ENCODE measurements at regions of chr13 and their contacts with region 1.

Region 1: DNA sequence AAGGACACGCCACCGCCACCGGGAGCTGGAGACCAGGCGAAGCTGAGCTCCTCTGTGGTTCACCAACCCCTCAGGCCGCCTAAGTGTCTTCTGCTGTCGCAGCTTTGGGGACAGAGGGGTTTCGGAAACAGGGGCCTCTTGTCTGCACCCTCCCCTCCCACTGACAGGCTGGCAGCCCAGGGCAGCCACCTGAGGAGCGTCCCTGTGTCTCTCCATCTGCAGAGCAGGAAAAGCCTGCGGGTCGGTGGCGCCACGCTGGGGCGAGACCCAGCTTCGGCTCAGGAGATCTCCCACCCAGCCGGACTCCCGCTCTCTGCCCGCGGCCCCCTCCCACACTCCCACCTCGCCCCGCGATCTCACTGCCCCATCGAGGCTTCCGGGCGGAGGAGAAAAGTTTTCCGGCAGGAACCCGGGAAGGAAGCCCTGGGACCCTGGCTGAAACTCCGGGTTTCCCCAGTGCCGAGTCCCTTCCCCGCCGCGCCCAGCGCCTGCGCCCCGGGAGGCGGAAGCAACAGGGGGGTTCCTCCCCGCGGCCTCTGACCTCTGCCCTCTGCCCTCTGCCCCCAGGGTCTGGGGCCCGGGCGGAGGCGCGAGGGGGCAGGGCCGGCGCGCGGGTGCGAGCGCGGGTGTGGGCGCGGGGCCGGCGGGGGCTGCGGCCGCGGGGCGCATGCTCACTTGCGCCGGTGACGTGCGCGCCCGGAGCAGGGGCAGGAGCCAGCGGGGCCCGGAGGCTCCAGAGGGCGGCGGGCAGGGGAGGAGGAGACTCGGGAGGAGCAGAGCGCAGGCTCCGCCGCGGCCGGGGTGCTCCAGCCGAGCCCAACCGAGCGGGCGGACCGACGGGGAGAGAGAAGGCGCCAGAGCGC is at the start of gene ATP11A:
- DNase-seq: peak; percentile 79 to 95 (median 90)
- H3K4me3 ChIP-seq: peak within 1 kb of the TSS; percentile 65 to 99 (median 89)
- H3K27ac ChIP-seq: peak within 1 kb of the TSS; percentile 61 to 97 (median 94)
- H3K27me3 ChIP-seq: no peaks in the 10 kb centered on the region
- CTCF ChIP-seq: peak in 19 of 56 donors; percentile 3 to 46 (median 18)
- total RNA-seq, gene ATP11A: 43.2 to 193 (median 80.8) TPM

Region 2: DNA sequence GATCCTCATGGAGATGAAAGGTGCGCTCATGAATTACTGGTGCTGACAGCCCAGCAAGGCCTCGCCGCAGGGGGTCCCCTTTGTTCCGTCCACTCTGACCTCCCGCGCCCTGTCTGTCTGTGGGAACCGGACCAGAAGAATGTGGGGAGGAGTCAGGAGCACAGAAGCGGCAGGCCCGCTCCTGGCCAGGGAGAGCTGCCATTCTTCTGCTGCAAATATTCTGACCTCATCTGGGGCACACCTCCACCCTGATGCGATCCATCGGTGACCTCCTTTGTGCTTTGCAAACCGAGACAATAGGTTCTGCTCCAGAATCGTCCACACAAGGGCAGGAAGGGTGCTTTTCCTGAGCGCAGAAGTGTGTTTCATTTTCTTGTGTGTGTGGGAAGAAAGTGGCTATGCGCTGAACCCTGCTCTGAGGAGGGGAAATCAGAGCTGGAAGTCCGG is 484.6 kb before region 1 on chr13:
- intact Hi-C with region 1: no loop called
- DNase-seq: no peak
- H3K4me3 ChIP-seq: peak overlapping the region in 34 of 59 donors; percentile 3 to 53 (median 26)
- H3K27ac ChIP-seq: no peak overlapping the region
- H3K27me3 ChIP-seq: peaks cover 0 to 77% (median 46%) of the 10 kb centered on the region in 45 donors
- CTCF ChIP-seq: no peak

Region 3: DNA sequence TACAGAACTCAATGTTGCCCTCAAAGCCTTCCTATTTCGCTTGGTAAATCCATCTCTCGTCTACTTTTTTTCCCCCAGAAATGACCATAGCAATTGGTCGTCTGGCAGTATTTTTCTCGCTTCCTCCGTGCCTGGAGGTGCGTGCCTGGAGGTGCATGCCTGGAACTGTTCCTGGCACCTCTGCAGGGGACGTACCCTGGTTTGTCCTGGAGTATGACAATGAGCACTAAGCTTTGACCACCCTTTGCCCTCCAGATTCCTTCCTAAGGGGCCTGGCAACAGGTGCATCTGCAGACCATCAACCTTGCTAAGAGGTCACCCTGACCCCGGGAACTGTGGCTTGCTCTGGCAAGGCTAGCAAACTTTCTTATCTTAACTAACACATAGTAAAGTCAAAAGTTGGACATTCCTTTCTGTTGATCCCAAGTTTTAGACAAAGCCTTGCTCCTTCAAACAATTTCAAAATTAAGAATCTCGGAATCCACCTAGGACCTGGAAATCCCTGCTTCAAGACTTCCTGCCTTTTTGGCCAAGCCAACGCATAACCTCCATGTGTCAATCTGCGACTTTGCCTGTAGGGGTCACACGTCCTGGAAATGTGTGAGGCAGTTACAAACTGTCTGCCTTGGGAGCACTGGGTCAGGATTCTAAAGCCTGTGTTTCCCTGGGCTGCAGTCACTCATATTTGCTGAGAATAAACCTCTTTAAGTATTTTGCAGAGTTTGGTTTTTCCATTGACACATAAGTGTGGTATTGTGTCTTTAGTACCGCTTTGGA is 72.8 kb before region 1 on chr13:
- intact Hi-C with region 1: no loop called
- DNase-seq: no peak
- H3K4me3 ChIP-seq: no peak overlapping the region
- H3K27ac ChIP-seq: no peak overlapping the region
- H3K27me3 ChIP-seq: peaks cover 0 to 7% (median 0%) of the 10 kb centered on the region in 45 donors
- CTCF ChIP-seq: peak in 49 of 56 donors; percentile 18 to 62 (median 41)

Region 4: GRCh38 chr13:112711528-112712265 is 22.2 kb after region 1 on chr13:
- intact Hi-C with region 1: loop called in 1 of 2 experiments (anchors 1 kb)
- DNase-seq: peak in 6 of 10 donors; percentile 56 to 76 (median 66)
- H3K4me3 ChIP-seq: peak overlapping the region in 34 of 59 donors; percentile 5 to 43 (median 20)
- H3K27ac ChIP-seq: peak overlapping the region; percentile 7 to 88 (median 75)
- H3K27me3 ChIP-seq: no peaks in the 10 kb centered on the region
- CTCF ChIP-seq: peak in 31 of 56 donors; percentile 7 to 52 (median 21)

Region 5: DNA sequence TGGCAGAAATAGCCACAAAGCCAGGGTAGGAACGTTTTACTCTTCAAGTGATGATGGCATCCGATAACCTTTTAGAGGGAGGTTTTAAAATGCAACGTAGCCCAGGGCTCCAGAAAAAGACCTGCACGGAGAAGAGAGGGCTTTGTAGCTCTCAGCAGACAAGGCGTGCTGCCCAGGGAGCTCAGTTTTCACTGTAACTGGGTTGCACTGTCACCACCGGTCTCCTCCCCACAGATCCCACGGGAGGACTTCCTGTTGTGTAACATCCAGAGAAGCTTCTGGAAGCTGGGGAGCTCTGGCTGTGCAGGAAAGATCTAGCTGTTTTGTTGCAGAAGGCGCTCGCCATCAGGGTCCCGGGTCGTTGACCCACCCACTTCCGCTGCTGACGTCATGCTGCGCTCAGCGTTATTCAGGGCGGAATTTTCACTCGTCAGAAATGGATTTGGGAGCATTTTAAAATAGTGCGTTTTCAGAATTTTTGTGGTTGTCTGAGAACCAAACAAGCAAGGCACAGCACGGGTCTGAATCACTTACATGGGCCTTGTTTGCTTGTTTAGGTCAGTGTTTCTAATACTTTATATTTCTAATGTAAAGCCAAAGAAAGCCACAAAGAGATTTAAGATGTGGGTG is 51.1 kb after region 1 on chr13:
- intact Hi-C with region 1: loop called (anchors 5 kb)
- DNase-seq: peak in 1 of 10 donors; percentile 31
- H3K4me3 ChIP-seq: peak overlapping the region in 3 of 59 donors; percentile 12 to 18 (median 14)
- H3K27ac ChIP-seq: peak overlapping the region; percentile 4 to 90 (median 80)
- H3K27me3 ChIP-seq: no peaks in the 10 kb centered on the region
- CTCF ChIP-seq: no peak

Region 6: DNA sequence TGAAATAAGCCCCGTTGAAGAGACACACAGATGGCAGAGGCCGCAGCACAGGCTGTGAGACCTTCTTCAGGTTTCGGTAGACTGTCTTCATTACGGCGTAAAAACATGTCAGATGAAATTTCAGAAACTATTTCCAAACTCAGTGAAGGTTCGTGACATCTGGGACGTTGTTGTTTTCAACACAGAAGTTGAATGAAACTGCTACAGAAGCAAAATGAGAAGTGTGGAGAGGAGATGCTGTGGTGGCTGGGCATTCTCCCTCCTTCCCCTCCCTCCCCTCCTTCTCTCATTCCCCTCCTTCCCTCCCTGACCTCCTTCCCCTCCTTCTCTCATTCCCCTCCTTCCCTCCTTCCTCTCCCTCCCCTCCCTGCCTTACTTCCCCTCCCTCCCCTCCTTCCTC is 113.9 kb after region 1 on chr13:
- intact Hi-C with region 1: loop called in 1 of 2 experiments (anchors 10 kb)
- DNase-seq: no peak
- H3K4me3 ChIP-seq: no peak overlapping the region
- H3K27ac ChIP-seq: peak overlapping the region in 10 of 59 donors; percentile 4 to 68 (median 28)
- H3K27me3 ChIP-seq: no peaks in the 10 kb centered on the region
- CTCF ChIP-seq: no peak

Region 7: DNA sequence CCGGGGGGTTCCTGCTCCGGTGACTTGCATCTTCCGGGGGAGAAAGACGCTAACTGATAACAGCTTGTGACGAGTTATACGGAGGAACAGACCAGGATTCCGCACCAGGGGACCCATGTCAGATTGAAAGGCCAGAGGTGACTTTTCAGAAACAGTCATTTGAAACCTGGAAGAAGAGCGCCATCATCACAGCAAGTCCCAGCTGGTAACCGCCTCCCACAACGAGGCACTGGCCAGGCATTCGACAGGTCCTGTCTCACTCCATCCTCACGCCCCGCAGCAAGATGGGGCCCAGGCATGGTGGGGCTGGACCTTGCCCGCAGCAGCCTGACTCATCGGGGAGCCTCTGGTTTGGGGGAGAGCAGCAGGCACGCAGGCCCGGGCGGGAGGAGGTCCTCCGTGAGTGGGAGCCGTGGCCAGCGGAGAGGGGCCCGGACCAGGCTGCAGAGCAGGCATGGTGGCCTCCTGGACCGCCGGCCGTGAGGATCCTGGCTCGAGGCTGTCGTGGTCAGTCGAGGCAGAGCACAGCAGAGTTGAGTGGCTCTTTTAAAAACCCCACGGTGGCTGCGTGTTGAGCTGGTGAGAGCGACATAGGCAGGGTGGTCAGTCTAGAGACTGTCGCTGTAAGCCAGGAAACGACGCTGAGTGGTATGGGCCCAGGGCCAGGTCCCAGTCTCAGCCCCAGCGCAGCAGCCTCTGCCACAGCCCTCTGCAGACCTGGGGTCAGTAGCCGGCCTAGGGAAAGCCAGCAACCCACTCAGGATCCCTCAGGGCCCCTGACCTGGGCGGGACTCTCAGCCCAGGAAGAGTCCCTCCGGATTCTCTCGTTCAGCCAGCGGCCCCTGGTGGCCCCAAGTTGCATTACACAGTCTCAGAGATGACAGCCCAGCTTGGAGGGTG is 184.6 kb after region 1 on chr13:
- intact Hi-C with region 1: loop called in 1 of 2 experiments (anchors 5 kb)
- DNase-seq: peak; percentile 60 to 85 (median 79)
- H3K4me3 ChIP-seq: no peak overlapping the region
- H3K27ac ChIP-seq: peak overlapping the region in 22 of 59 donors; percentile 2 to 70 (median 34)
- H3K27me3 ChIP-seq: no peaks in the 10 kb centered on the region
- CTCF ChIP-seq: peak; percentile 85 to 98 (median 94)

Measured in dorsolateral prefrontal cortex (tissue), 120 donors.